ENCODE measurements at regions of chr7 and their contacts with region 1.

Region 1: DNA sequence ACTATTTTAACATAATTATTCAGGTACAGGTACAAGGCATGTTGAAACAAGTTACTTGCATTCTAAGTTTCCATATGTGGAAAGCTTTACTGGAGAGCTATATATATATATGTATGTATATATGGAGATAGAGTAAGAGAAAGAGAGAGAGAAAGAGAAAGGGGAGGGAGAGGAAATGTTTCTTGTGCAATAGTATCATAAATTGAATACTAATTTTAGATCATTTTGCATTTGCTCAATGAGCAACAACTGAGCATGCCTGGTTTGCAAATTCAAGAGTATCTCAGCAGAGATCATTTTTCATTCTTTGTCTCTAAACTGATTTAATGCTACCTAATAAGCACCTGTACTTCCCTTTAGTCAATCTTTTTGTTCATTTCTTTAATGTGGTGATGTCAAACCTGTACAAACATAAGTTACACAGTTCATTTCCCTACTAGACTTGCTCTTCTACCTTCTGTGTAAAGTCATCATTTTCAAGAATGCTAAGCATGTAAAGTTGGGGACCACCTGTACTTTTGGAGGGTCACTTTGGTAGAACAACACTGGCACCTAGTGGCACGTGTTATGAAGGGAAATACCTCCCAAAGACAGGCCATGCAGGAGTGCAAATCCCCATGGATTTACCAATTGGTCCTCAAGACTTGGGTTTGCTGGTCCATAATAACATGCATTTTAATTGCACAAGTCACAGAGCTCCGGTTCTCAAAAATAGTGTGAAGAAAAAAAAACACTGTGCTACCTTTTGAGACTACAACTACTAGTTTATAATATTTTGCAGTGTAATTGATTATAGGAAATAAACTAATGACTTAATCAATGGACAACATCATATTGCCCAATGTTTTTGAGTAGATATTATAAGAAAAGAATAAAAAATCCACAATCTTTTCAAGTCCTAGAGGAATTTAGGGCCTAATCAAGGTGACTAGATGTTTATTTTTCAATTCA is 431.2 kb upstream of the IGFBP3 start:
- DNase-seq: peak; percentile 26

Region 2: GRCh38 chr7:45917658-45918057 is 434.6 kb before region 1 on chr7:
- in situ Hi-C with region 1: loop called (anchors 25 kb)
- DNase-seq: peak; percentile 64

Region 3: DNA sequence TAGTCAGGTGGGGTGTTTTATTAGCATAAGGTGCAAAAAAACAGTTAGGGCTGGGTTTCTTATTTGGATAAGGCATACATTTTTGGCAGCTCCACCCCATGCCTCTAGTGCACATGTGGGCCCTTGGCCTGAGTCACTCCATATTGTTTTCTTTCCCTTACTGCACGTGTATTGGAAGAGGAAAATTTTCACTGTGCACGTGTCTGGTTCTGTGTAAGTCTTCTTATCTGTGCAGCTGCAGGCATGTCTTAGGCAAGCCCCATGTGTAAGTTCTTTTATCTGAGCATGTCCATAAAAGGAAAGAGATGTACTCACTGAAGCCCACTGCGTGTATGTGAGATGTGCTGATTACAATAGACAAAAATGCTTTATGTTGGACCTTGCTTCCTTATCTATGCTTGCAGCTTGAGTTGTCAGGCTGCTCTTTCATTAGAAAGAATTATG is 109.1 kb after region 1 on chr7:
- in situ Hi-C with region 1: no loop called
- DNase-seq: no peak